ENCODE measurements at regions of chr2 and their contacts with region 1.

Region 1: GRCh38 chr2:63698825-63699548 is 110.2 kb downstream of the MDH1 start:
- DNase-seq: peak in 20 of 42 donors; percentile 1 to 65 (median 22)

Region 2: GRCh38 chr2:62140426-62141141 is 1558.4 kb before region 1 on chr2:
- intact Hi-C with region 1: no loop called
- DNase-seq: no peak

Region 3: GRCh38 chr2:63861220-63861822 is 162.3 kb after region 1 on chr2:
- intact Hi-C with region 1: loop called (anchors 10 kb)
- DNase-seq: peak in 29 of 42 donors; percentile 18 to 81 (median 43)

Region 4: DNA sequence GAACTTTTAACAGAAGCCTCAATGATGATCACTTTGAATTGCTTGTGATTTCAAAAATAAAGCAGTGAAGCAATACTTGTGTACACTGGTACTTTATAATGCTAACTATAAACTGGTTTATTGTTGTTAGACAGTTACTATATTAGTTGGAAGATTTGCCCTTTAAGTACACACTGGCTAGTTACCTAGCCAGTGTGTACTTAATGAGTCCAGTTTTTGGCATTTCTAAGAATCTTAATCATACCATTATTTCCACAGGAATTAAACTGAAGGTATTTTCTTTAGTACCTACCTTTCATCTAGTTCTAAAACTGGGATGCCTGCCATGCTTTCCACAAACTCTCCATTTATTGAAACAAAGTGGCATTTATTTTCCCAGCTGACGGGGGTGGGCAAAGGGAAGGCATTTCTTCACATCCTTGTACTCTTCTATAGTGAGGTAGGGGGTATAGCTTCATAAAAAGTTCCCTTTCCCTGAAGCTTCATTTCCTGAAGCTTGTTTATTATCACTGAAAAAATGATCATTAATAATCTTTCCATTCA is 192.6 kb after region 1 on chr2:
- intact Hi-C with region 1: loop called (anchors 10 kb)
- DNase-seq: peak in 12 of 42 donors; percentile 6 to 49 (median 22)

Measured in head of caudate nucleus (tissue), 42 donors.